ENCODE measurements at regions of chr19 and their contacts with region 1.

Region 1: GRCh38 chr19:9205501-9206113 is 13.8 kb downstream of the OR7D4 start:
- DNase-seq: peak; percentile 38
- ATAC-seq: peak; percentile 90
- H3K4me3 ChIP-seq: peak overlapping the region; percentile 25 to 54; a peak in 3 of 4 replicates
- H3K27ac ChIP-seq: no peak overlapping the region
- H3K4me1 ChIP-seq: no peaks in the 10 kb centered on the region
- H3K27me3 ChIP-seq: no peaks in the 10 kb centered on the region
- CTCF ChIP-seq: peak; percentile 88

Region 2: GRCh38 chr19:9171393-9171991 is 34.1 kb before region 1 on chr19:
- CTCF ChIA-PET with region 1: no interaction called
- POLR2A ChIA-PET with region 1: interaction called, 23 read pairs
- in situ Hi-C with region 1: no loop called
- intact Hi-C with region 1: no loop called
- DNase-seq: no peak
- ATAC-seq: no peak
- H3K4me3 ChIP-seq: no peak overlapping the region
- H3K27ac ChIP-seq: no peak overlapping the region
- H3K4me1 ChIP-seq: no peaks in the 10 kb centered on the region
- H3K27me3 ChIP-seq: no peaks in the 10 kb centered on the region
- CTCF ChIP-seq: no peak

Region 3: GRCh38 chr19:9219489-9219888 is 13.9 kb after region 1 on chr19 and contains the start of gene OR7D4:
- CTCF ChIA-PET with region 1: no interaction called
- POLR2A ChIA-PET with region 1: no interaction called
- in situ Hi-C with region 1: no loop called
- intact Hi-C with region 1: no loop called
- DNase-seq: no peak
- ATAC-seq: no peak
- H3K4me3 ChIP-seq: no peak within 1 kb of the TSS
- H3K27ac ChIP-seq: no peak within 1 kb of the TSS
- H3K4me1 ChIP-seq: no peaks in the 10 kb centered on the region
- H3K27me3 ChIP-seq: no peaks in the 10 kb centered on the region
- CTCF ChIP-seq: no peak
- total RNA-seq, gene OR7D4: not detected

Region 4: GRCh38 chr19:9818734-9819589 is 613.4 kb after region 1 on chr19 and contains the start of gene FBXL12:
- CTCF ChIA-PET with region 1: interaction called, 12 read pairs
- POLR2A ChIA-PET with region 1: no interaction called
- in situ Hi-C with region 1: no loop called
- intact Hi-C with region 1: no loop called
- DNase-seq: peak; percentile 85
- ATAC-seq: peak; percentile 92
- H3K4me3 ChIP-seq: peak within 1 kb of the TSS; percentile 91 to 92
- H3K27ac ChIP-seq: peak within 1 kb of the TSS; percentile 86
- H3K4me1 ChIP-seq: no peaks in the 10 kb centered on the region
- H3K27me3 ChIP-seq: no peaks in the 10 kb centered on the region
- CTCF ChIP-seq: no peak
- total RNA-seq, gene FBXL12: 29.2 TPM

Measured in Panc1 (cell line).